Heart left ventricle (tissue), 16 donors: ENCODE measurements at regions of chr14 and their contacts with region 1.

Region 1: DNA sequence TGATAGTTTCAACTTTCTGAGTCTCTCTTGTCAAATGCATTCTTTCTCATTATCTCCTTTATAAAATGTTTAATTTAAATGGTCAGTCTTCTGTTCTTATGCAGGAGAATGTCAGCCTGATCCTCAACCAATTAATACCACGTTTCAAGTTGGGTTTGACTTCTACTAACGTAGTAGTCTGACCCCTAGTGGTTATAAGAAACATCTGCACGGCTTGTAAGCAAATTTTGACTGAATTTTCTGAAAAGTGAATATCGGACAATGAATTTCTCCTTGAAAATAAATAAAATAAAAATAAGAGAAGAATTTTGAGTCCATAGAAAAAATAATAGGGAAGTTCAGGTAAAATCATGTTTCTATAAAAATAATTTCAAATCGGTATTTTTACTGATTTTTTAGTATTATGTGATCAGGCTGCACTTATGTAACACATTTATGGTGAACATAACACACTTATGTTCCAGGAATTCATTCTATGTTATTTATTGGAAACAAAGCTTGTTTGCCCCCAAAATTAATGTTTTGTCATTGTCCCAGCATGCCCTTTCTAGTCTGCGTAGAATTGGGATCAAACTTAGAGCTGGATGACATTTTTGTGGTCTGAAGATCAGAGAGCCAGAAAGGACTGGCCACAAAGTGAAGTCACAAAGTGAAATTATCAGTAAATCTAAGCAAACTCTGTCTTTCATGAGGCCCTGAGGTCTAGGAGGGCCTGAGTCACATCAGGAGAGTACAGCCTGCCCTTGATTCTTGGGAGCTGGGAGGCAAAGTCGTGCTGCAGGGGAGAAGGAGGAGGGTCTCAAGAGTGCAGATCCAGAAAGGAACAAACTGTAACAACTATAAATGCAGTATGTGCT is 101.2 kb upstream of the STXBP6 start:
- DNase-seq: no peak
- ATAC-seq: peak in 1 of 4 donors; percentile 45
- H3K4me3 ChIP-seq: no peak overlapping the region
- H3K27ac ChIP-seq: no peak overlapping the region
- H3K4me1 ChIP-seq: no peaks in the 10 kb centered on the region
- H3K27me3 ChIP-seq: no peaks in the 10 kb centered on the region
- CTCF ChIP-seq: peak; percentile 75 to 90 (median 85)
- POLR2A ChIP-seq: no peak

Region 2: DNA sequence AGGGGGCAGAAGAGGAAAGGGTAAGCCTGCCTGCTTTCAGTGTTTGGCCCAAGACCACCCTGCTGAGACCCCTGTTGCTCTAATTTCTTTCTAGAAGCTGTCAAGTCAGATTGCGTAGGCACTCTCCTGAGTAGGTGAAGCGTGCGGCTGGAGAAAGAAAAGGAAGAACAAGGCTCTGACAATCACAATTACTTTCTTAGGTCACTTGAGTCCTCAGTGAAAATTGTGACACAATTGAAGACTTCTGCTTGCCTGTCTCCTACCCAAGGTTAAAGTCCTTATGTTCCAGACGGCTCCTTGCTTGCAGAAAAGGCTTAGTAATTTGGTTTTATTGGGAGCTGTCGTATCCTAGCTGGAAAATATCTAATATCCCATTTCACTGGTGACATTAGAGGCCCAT is 574.4 kb before region 1 on chr14:
- intact Hi-C with region 1: no loop called
- DNase-seq: no peak
- ATAC-seq: no peak
- H3K4me3 ChIP-seq: no peak overlapping the region
- H3K27ac ChIP-seq: no peak overlapping the region
- H3K4me1 ChIP-seq: peaks cover 0 to 6% (median 0%) of the 10 kb centered on the region in 12 donors
- H3K27me3 ChIP-seq: peaks cover 0 to 3% (median 0%) of the 10 kb centered on the region in 9 donors
- CTCF ChIP-seq: no peak
- POLR2A ChIP-seq: no peak

Region 3: GRCh38 chr14:24710403-24711112 is 440.6 kb before region 1 on chr14:
- intact Hi-C with region 1: loop called in 6 of 10 experiments (anchors 1 to 5 kb)
- DNase-seq: peak in 4 of 5 donors; percentile 40 to 52 (median 48)
- ATAC-seq: peak in 3 of 4 donors; percentile 49 to 76 (median 72)
- H3K4me3 ChIP-seq: peak overlapping the region in 8 of 12 donors; percentile 13 to 52 (median 31)
- H3K27ac ChIP-seq: no peak overlapping the region
- H3K4me1 ChIP-seq: peaks cover 0 to 3% (median 0%) of the 10 kb centered on the region in 12 donors
- H3K27me3 ChIP-seq: no peaks in the 10 kb centered on the region
- CTCF ChIP-seq: peak; percentile 77 to 91 (median 80)
- POLR2A ChIP-seq: no peak

Region 4: DNA sequence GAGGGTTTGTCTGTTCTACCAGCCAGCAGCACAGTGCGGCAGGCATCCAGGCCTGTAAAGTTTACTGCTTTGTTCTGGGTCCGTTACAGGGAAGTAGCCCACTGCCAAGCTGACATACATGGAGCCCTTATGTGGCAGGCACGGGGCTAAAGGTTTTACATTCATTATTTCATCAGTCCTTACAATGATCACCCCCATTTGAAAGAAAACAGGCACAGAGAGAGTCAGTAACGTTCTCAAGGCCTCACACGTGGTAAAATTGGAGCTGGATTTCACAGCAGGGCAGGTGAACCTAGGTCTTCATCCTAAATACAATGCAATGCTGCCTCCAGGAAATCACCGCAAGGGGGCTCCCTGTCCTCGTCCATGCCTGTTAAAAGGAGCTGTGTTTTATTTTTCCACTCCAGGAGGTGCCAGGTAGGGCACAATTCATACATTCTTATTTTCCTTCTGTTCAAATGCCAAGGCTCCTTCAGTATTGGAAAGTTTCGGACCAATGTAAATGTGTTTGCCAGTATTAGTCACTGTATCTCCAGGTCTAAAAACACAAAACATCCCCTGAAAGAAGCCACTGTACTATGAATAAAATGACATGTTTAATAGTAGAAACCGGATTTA is 345.0 kb before region 1 on chr14:
- intact Hi-C with region 1: loop called in 5 of 10 experiments (anchors 1 to 5 kb)
- DNase-seq: peak; percentile 62 to 78 (median 69)
- ATAC-seq: peak; percentile 46 to 80 (median 76)
- H3K4me3 ChIP-seq: no peak overlapping the region
- H3K27ac ChIP-seq: no peak overlapping the region
- H3K4me1 ChIP-seq: peaks cover 0 to 34% (median 15%) of the 10 kb centered on the region in 12 donors
- H3K27me3 ChIP-seq: no peaks in the 10 kb centered on the region
- CTCF ChIP-seq: peak; percentile 71 to 93 (median 84)
- POLR2A ChIP-seq: no peak

Region 5: DNA sequence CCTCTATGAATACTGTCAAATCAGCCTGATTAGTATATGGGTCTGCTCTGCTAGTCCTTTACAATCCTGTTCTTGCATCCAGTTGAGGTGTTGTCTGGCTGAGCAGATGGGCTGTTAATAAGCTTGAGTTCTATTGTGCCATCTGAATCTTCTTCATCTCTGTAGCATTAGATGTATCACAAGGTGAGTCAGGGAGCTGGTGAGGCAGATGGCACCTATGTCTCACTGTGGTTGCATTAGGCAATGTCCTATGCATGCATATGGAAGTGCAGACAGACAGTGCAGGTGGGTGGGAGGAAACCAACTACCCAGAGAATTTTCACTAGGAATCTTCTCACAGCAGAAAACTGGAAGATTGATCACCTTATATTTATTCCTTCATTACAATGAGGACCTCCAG is 64.4 kb after region 1 on chr14:
- intact Hi-C with region 1: no loop called
- DNase-seq: no peak
- ATAC-seq: no peak
- H3K4me3 ChIP-seq: no peak overlapping the region
- H3K27ac ChIP-seq: no peak overlapping the region
- H3K4me1 ChIP-seq: no peaks in the 10 kb centered on the region
- H3K27me3 ChIP-seq: peaks cover 0 to 3% (median 0%) of the 10 kb centered on the region in 9 donors
- CTCF ChIP-seq: no peak
- POLR2A ChIP-seq: no peak

Region 6: GRCh38 chr14:25406818-25407217 is 255.7 kb after region 1 on chr14:
- intact Hi-C with region 1: loop called in 1 of 10 experiments (anchors 5 kb)
- DNase-seq: no peak
- ATAC-seq: no peak
- H3K4me3 ChIP-seq: no peak overlapping the region
- H3K27ac ChIP-seq: no peak overlapping the region
- H3K4me1 ChIP-seq: no peaks in the 10 kb centered on the region
- H3K27me3 ChIP-seq: peaks cover 0 to 2% (median 0%) of the 10 kb centered on the region in 9 donors
- CTCF ChIP-seq: peak in 9 of 12 donors; percentile 16 to 39 (median 34)
- POLR2A ChIP-seq: no peak